ENCODE measurements at regions of chr14 and their contacts with region 1.

Region 1: GRCh38 chr14:89915114-89915878 is 39.2 kb downstream of the EFCAB11 start:
- DNase-seq: peak; percentile 78
- H3K4me3 Mint-ChIP-seq: no peak overlapping the region
- H3K27ac Mint-ChIP-seq: no peak overlapping the region
- H3K4me1 Mint-ChIP-seq: no peaks in the 10 kb centered on the region
- H3K27me3 Mint-ChIP-seq: no peaks in the 10 kb centered on the region
- CTCF ChIP-seq: peak; percentile 91

Region 2: GRCh38 chr14:88792572-88793258 is 1122.6 kb before region 1 on chr14 and contains the start of gene EML5:
- CTCF ChIA-PET with region 1: no interaction called
- POLR2A ChIA-PET with region 1: interaction called, 4 read pairs
- intact Hi-C with region 1: loop called (anchors 5 kb)
- DNase-seq: peak; percentile 79
- H3K4me3 Mint-ChIP-seq: peak within 1 kb of the TSS; percentile 70
- H3K27ac Mint-ChIP-seq: no peak within 1 kb of the TSS
- H3K4me1 Mint-ChIP-seq: no peaks in the 10 kb centered on the region
- H3K27me3 Mint-ChIP-seq: no peaks in the 10 kb centered on the region
- CTCF ChIP-seq: peak; percentile 3
- total RNA-seq, gene EML5: 0.37 and 0.54 TPM in 2 replicates

Region 3: DNA sequence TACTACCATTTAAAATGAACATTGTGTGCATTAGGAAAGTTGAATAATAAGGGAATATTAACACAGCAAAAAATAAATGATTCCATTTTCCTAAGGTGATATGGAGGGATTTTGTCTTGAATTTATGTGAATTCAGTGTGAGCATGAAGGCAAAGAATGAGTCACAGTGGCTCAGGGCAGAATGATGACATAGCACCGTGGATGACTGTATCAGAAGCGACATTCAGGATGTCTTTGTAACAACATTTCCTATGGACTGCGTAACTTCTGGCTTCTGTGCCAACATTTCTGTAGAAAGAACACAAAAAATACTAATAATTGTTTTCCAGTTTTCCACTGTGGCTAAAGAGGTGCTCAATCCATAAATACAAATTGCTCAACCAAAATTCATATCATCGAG is 1036.3 kb before region 1 on chr14:
- CTCF ChIA-PET with region 1: no interaction called
- POLR2A ChIA-PET with region 1: no interaction called
- intact Hi-C with region 1: loop called (anchors 1 kb)
- DNase-seq: peak; percentile 77
- H3K4me3 Mint-ChIP-seq: no peak overlapping the region
- H3K27ac Mint-ChIP-seq: peak overlapping the region; percentile 27
- H3K4me1 Mint-ChIP-seq: no peaks in the 10 kb centered on the region
- H3K27me3 Mint-ChIP-seq: no peaks in the 10 kb centered on the region
- CTCF ChIP-seq: no peak

Region 4: DNA sequence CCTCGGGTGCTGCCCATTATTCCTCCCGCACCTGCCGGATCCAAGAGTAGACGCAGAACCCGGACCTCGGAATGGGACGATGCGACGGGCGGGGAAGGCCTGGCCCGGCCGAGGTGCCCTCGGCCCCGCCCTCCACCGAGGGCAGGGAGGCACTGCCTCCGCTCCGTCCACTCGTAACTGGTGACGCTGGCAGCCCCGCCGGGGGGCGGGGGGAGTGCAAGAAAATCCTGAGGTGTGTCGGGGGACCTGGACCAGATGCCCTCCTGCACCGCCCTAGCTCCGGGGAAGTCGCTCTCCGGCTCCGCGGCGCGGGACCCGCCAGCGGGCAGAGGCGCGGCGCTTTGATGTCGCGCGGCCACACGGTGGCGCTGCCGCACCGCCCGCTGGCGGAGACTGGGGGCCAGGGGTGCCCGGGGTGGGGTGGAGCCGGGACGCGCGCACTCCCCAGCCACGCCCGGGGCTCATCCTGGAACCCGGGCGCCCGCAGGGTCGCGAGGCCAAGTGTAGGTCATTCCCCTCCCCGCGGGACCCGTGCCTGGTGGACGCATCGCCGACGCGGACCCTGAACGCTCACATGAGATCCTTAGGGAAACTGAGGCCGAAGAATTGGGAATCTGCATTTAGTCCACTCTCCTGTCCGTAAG is 888.1 kb before region 1 on chr14:
- CTCF ChIA-PET with region 1: interaction called, 16 read pairs
- POLR2A ChIA-PET with region 1: no interaction called
- intact Hi-C with region 1: loop called (anchors 2 kb)
- DNase-seq: peak; percentile 36
- H3K4me3 Mint-ChIP-seq: no peak overlapping the region
- H3K27ac Mint-ChIP-seq: no peak overlapping the region
- H3K4me1 Mint-ChIP-seq: no peaks in the 10 kb centered on the region
- H3K27me3 Mint-ChIP-seq: peaks cover 16% of the 10 kb centered on the region
- CTCF ChIP-seq: peak; percentile 93

Region 5: GRCh38 chr14:89040460-89041259 is 874.6 kb before region 1 on chr14:
- CTCF ChIA-PET with region 1: interaction called, 23 read pairs
- POLR2A ChIA-PET with region 1: interaction called, 3 read pairs
- intact Hi-C with region 1: loop called (anchors 1 kb)
- DNase-seq: peak; percentile 91
- H3K4me3 Mint-ChIP-seq: peak overlapping the region; percentile 68
- H3K27ac Mint-ChIP-seq: peak overlapping the region; percentile 24
- H3K4me1 Mint-ChIP-seq: peaks cover 8% of the 10 kb centered on the region
- H3K27me3 Mint-ChIP-seq: no peaks in the 10 kb centered on the region
- CTCF ChIP-seq: peak; percentile 98

Region 6: DNA sequence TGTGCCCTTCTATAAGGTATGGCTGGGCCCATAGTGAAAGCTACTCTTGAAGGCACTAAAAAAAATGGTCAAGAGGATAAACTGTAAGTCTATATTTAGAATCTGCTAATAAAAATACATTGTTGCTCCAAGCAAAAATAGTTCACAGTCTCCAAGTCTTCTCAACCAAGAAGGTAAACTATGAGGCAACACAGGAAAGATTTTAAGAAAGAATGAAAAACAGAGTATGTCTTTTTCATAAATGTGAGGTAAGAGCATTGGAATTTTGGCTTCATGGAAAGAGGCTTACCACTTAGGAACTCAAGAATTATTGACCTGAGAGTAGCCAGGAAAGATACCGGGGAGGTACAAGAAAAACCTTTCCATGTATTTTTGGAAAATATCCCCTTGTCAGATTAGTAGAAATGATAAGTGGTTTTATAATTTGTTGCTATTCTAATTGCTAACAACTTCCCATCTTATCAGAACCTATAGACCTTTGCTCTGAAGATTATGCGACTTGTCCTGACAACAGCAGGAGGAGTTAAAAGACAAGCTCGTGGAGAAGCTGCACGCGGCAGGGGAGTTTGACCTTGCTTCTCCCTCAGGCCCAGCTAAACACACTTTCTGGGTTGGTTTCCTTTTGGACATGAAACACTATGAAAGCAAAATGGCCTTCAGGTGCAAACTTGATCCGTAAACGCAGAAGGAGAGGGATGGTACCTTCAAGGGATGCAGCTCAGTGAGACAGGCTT is 736.3 kb before region 1 on chr14:
- CTCF ChIA-PET with region 1: no interaction called
- POLR2A ChIA-PET with region 1: no interaction called
- intact Hi-C with region 1: loop called (anchors 1 kb)
- DNase-seq: no peak
- H3K4me3 Mint-ChIP-seq: no peak overlapping the region
- H3K27ac Mint-ChIP-seq: no peak overlapping the region
- H3K4me1 Mint-ChIP-seq: no peaks in the 10 kb centered on the region
- H3K27me3 Mint-ChIP-seq: no peaks in the 10 kb centered on the region
- CTCF ChIP-seq: no peak

Region 7: DNA sequence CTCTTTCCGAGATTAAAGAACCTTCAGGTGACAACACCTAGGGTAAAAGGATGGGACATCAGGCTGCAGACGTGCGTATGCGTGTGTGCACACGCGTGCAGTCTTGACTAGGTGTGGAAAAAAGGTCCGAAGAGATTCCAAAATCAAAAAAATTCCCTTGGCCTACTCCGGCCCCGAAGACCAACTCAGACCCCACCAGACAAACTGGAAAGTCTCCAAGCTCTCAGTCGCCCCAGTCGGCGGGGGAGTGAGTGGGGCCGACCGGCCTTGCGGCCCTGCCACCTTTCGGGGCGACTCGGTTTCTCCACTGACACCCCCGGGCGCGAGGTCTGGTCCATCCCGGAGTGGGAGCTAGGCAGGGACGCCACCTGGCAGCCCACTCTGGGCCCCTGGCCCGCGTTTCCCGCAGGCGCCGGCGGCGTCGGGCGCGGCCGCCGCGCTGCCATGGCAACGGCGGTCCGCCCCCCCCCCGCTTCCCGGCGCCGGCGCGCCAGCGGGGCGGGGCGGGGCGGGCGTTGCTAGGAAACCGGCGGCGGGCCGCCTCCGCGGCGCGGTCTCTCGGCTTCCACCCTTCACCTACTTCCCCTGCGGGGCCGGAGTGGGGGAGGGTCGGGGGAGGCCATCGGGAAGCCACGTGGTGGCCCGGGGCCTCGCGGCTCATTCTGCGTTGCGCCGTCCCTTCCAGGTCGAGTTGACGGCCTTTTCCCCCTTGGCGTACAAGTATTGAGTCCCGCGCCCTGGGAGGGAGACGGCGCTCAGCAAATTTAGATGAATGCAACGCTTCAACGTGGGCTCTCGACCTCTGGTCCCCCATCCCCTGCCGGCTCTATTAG is 213.9 kb before region 1 on chr14:
- CTCF ChIA-PET with region 1: no interaction called
- POLR2A ChIA-PET with region 1: no interaction called
- intact Hi-C with region 1: no loop called
- DNase-seq: peak; percentile 57
- H3K4me3 Mint-ChIP-seq: peak overlapping the region; percentile 67
- H3K27ac Mint-ChIP-seq: no peak overlapping the region
- H3K4me1 Mint-ChIP-seq: peaks cover 5% of the 10 kb centered on the region
- H3K27me3 Mint-ChIP-seq: no peaks in the 10 kb centered on the region
- CTCF ChIP-seq: no peak

Region 8: DNA sequence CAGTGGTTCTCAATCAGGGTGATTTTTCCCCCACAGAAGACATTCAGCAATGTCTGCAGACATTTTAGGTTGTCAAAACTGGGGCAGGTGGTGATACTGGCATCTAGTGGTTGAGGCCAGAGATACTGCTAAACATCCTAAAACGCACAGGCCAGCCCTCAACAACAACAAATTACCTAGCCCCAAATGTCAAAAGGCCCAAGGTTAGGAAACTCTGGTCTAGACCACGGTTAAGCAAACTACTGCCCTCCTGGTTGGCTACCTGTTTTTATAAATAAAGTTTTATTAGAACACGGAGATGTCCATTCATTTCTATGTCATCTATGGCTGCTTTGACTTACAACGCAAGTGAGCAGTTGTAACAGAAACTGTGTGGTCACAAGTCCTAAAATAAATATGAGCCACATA is 147.4 kb before region 1 on chr14:
- CTCF ChIA-PET with region 1: interaction called, 5 read pairs
- POLR2A ChIA-PET with region 1: no interaction called
- intact Hi-C with region 1: loop called (anchors 5 kb)
- DNase-seq: peak; percentile 51
- H3K4me3 Mint-ChIP-seq: no peak overlapping the region
- H3K27ac Mint-ChIP-seq: no peak overlapping the region
- H3K4me1 Mint-ChIP-seq: no peaks in the 10 kb centered on the region
- H3K27me3 Mint-ChIP-seq: peaks cover 7% of the 10 kb centered on the region
- CTCF ChIP-seq: peak; percentile 66